B cell (primary cell): ENCODE measurements at regions of chr15 and their contacts with region 1.

Region 1: DNA sequence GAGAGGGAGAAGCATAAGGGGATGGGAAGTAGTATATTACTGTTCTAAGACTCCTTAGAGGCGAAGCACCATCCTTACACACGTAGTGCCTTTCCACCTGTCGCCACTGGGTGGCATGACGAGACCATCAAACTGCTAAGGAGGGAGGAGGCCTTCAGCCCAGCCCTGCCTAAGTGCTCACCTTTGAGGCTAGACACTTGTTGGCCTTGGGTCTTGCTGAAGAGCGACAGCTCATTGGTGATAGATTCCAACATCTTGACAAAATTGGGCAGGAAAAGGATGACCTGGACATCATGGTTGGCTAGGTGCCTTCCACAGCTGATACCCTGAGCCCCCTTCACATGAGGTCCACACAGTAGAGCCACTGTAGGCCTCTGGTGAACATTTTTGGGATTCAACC is 19.6 kb downstream of the CLK3 start:
- DNase-seq: peak; percentile 83
- ATAC-seq: peak; percentile 71
- H3K4me3 ChIP-seq: no peak overlapping the region
- H3K4me3 Mint-ChIP-seq: no peak overlapping the region
- H3K27ac ChIP-seq: no peak overlapping the region
- H3K27ac Mint-ChIP-seq: peak overlapping the region; percentile 33
- H3K4me1 ChIP-seq: peaks cover 8 to 20% of the 10 kb centered on the region in 2 donors
- H3K4me1 Mint-ChIP-seq: peaks cover 18% of the 10 kb centered on the region
- H3K27me3 ChIP-seq: no peaks in the 10 kb centered on the region
- H3K27me3 Mint-ChIP-seq: no peaks in the 10 kb centered on the region
- CTCF ChIP-seq: peak; percentile 88

Region 2: DNA sequence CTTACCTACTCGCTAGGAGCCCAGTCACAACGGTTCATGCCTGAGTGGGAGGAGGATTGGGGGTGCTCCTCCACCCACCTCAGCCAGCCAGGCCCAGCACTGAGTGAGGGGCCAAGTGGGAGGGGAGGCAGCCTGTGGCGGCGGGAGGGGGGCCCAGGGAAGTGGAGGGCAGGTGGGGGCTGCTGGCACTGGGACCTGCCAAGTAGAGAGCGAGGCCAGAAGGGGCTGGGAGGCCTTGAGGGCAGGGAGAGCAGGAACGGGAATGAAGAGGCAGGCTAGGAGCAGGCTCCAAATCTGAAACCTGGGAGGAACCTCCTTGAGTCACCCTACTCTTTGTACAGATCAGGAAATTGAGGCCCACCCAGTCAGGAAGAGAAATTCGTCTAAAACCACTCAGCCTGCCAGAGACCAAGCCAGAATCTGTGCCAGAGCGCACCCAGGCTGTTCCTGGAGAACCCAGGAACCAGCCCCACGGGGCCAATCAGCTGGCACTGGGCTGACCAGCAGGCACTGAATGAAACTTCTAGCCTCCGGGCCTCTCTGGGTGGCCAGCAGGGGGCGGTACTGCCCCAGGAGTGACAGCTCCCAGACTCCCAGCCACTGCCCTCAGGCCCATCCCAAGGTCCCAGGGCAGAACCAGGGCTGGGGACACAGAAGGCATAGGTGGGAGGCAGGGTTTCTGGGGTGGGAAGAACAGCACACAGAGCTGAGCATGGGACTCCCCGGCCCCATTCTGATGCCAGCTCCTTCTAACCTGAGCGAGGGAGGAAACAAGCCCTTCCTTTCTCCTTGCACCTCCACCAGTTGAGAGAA is 253.0 kb before region 1 on chr15:
- CTCF ChIA-PET with region 1: interaction called, 39 read pairs
- POLR2A ChIA-PET with region 1: interaction called, 14 read pairs
- intact Hi-C with region 1: no loop called
- DNase-seq: peak; percentile 84
- ATAC-seq: no peak
- H3K4me3 ChIP-seq: no peak overlapping the region
- H3K4me3 Mint-ChIP-seq: no peak overlapping the region
- H3K27ac ChIP-seq: peak overlapping the region in 1 of 2 donors; percentile 97
- H3K27ac Mint-ChIP-seq: peak overlapping the region; percentile 98
- H3K4me1 ChIP-seq: peaks cover 53 to 58% of the 10 kb centered on the region in 2 donors
- H3K4me1 Mint-ChIP-seq: peaks cover 59% of the 10 kb centered on the region
- H3K27me3 ChIP-seq: no peaks in the 10 kb centered on the region
- H3K27me3 Mint-ChIP-seq: no peaks in the 10 kb centered on the region
- CTCF ChIP-seq: peak; percentile 95

Region 3: GRCh38 chr15:74573987-74574386 is 61.2 kb before region 1 on chr15:
- CTCF ChIA-PET with region 1: no interaction called
- POLR2A ChIA-PET with region 1: no interaction called
- intact Hi-C with region 1: no loop called
- DNase-seq: no peak
- ATAC-seq: no peak
- H3K4me3 ChIP-seq: no peak overlapping the region
- H3K4me3 Mint-ChIP-seq: no peak overlapping the region
- H3K27ac ChIP-seq: no peak overlapping the region
- H3K27ac Mint-ChIP-seq: no peak overlapping the region
- H3K4me1 ChIP-seq: no peaks in the 10 kb centered on the region
- H3K4me1 Mint-ChIP-seq: no peaks in the 10 kb centered on the region
- H3K27me3 ChIP-seq: no peaks in the 10 kb centered on the region
- H3K27me3 Mint-ChIP-seq: no peaks in the 10 kb centered on the region
- CTCF ChIP-seq: no peak

Region 4: GRCh38 chr15:74651242-74651741 is 16.1 kb after region 1 on chr15:
- CTCF ChIA-PET with region 1: interaction called, 10 read pairs
- POLR2A ChIA-PET with region 1: interaction called, 4 read pairs
- intact Hi-C with region 1: no loop called
- DNase-seq: no peak
- ATAC-seq: no peak
- H3K4me3 ChIP-seq: no peak overlapping the region
- H3K4me3 Mint-ChIP-seq: no peak overlapping the region
- H3K27ac ChIP-seq: no peak overlapping the region
- H3K27ac Mint-ChIP-seq: no peak overlapping the region
- H3K4me1 ChIP-seq: peaks cover 13 to 17% of the 10 kb centered on the region in 2 donors
- H3K4me1 Mint-ChIP-seq: peaks cover 36% of the 10 kb centered on the region
- H3K27me3 ChIP-seq: no peaks in the 10 kb centered on the region
- H3K27me3 Mint-ChIP-seq: no peaks in the 10 kb centered on the region
- CTCF ChIP-seq: no peak

Region 5: GRCh38 chr15:74799856-74800547 is 164.8 kb after region 1 on chr15:
- CTCF ChIA-PET with region 1: interaction called, 117 read pairs
- POLR2A ChIA-PET with region 1: no interaction called
- intact Hi-C with region 1: no loop called
- DNase-seq: peak; percentile 94
- ATAC-seq: peak; percentile 90
- H3K4me3 ChIP-seq: no peak overlapping the region
- H3K4me3 Mint-ChIP-seq: peak overlapping the region; percentile 78
- H3K27ac ChIP-seq: peak overlapping the region; percentile 89 to 93
- H3K27ac Mint-ChIP-seq: peak overlapping the region; percentile 90
- H3K4me1 ChIP-seq: peaks cover 56 to 61% of the 10 kb centered on the region in 2 donors
- H3K4me1 Mint-ChIP-seq: peaks cover 52% of the 10 kb centered on the region
- H3K27me3 ChIP-seq: no peaks in the 10 kb centered on the region
- H3K27me3 Mint-ChIP-seq: no peaks in the 10 kb centered on the region
- CTCF ChIP-seq: peak; percentile 93

Region 6: GRCh38 chr15:74906446-74907162 is 271.4 kb after region 1 on chr15 and contains the start of gene FAM219B:
- CTCF ChIA-PET with region 1: interaction called, 93 read pairs
- POLR2A ChIA-PET with region 1: interaction called, 3 read pairs
- intact Hi-C with region 1: loop called (anchors 1 kb)
- DNase-seq: peak; percentile 86
- ATAC-seq: peak; percentile 90
- H3K4me3 ChIP-seq: peak within 1 kb of the TSS; percentile 73 to 89 (median 85)
- H3K4me3 Mint-ChIP-seq: peak within 1 kb of the TSS; percentile 98
- H3K27ac ChIP-seq: peak within 1 kb of the TSS; percentile 48 to 79
- H3K27ac Mint-ChIP-seq: peak within 1 kb of the TSS; percentile 98
- H3K4me1 ChIP-seq: peaks cover 19 to 23% of the 10 kb centered on the region in 2 donors
- H3K4me1 Mint-ChIP-seq: peaks cover 45% of the 10 kb centered on the region
- H3K27me3 ChIP-seq: no peaks in the 10 kb centered on the region
- H3K27me3 Mint-ChIP-seq: no peaks in the 10 kb centered on the region
- CTCF ChIP-seq: no peak
- total RNA-seq, gene FAM219B: 109 and 135 TPM in 2 replicates

Region 7: GRCh38 chr15:75201609-75202250 is 566.5 kb after region 1 on chr15 and contains the start of gene C15orf39:
- CTCF ChIA-PET with region 1: no interaction called
- POLR2A ChIA-PET with region 1: no interaction called
- intact Hi-C with region 1: loop called (anchors 10 kb)
- DNase-seq: peak; percentile 89
- ATAC-seq: peak; percentile 59
- H3K4me3 ChIP-seq: peak within 1 kb of the TSS; percentile 53 to 77 (median 73)
- H3K4me3 Mint-ChIP-seq: peak within 1 kb of the TSS; percentile 98
- H3K27ac ChIP-seq: peak within 1 kb of the TSS; percentile 59 to 86
- H3K27ac Mint-ChIP-seq: peak within 1 kb of the TSS; percentile 96
- H3K4me1 ChIP-seq: peaks cover 24 to 51% of the 10 kb centered on the region in 2 donors
- H3K4me1 Mint-ChIP-seq: peaks cover 41% of the 10 kb centered on the region
- H3K27me3 ChIP-seq: peaks cover 0 to 19% (median 5%) of the 10 kb centered on the region in 4 experiments
- H3K27me3 Mint-ChIP-seq: no peaks in the 10 kb centered on the region
- CTCF ChIP-seq: peak; percentile 97
- total RNA-seq, gene C15orf39: 72.1 and 72.7 TPM in 2 replicates